ENCODE measurements at regions of chr1 and their contacts with region 1.

Region 1: GRCh38 chr1:18902523-18903290 is at the start of gene ALDH4A1:
- DNase-seq: peak; percentile 98 to 99 (median 98)
- ATAC-seq: peak; percentile 97 to 98 (median 97)
- H3K4me3 ChIP-seq: peak within 1 kb of the TSS; percentile 60 to 97 (median 85)
- H3K27ac ChIP-seq: peak within 1 kb of the TSS; percentile 74 to 95 (median 92)
- H3K4me1 ChIP-seq: peaks cover 0 to 38% (median 24%) of the 10 kb centered on the region in 12 donors
- H3K27me3 ChIP-seq: no peaks in the 10 kb centered on the region
- CTCF ChIP-seq: peak in 2 of 12 donors; percentile 13 to 28
- POLR2A ChIP-seq: peak in 1 of 2 donors; percentile 58
- total RNA-seq, gene ALDH4A1: 20.8 to 57.6 (median 30.6) TPM

Region 2: GRCh38 chr1:18949686-18950400 is 47.1 kb after region 1 on chr1:
- intact Hi-C with region 1: loop called in 3 of 10 experiments (anchors 5 to 10 kb)
- DNase-seq: peak in 2 of 5 donors; percentile 44 to 71
- ATAC-seq: peak in 3 of 4 donors; percentile 21 to 52 (median 32)
- H3K4me3 ChIP-seq: peak overlapping the region in 11 of 12 donors; percentile 7 to 61 (median 48)
- H3K27ac ChIP-seq: peak overlapping the region; percentile 69 to 96 (median 88)
- H3K4me1 ChIP-seq: peaks cover 5 to 96% (median 69%) of the 10 kb centered on the region in 12 donors
- H3K27me3 ChIP-seq: no peaks in the 10 kb centered on the region
- CTCF ChIP-seq: peak in 4 of 12 donors; percentile 9 to 38 (median 27)
- POLR2A ChIP-seq: no peak

Region 3: DNA sequence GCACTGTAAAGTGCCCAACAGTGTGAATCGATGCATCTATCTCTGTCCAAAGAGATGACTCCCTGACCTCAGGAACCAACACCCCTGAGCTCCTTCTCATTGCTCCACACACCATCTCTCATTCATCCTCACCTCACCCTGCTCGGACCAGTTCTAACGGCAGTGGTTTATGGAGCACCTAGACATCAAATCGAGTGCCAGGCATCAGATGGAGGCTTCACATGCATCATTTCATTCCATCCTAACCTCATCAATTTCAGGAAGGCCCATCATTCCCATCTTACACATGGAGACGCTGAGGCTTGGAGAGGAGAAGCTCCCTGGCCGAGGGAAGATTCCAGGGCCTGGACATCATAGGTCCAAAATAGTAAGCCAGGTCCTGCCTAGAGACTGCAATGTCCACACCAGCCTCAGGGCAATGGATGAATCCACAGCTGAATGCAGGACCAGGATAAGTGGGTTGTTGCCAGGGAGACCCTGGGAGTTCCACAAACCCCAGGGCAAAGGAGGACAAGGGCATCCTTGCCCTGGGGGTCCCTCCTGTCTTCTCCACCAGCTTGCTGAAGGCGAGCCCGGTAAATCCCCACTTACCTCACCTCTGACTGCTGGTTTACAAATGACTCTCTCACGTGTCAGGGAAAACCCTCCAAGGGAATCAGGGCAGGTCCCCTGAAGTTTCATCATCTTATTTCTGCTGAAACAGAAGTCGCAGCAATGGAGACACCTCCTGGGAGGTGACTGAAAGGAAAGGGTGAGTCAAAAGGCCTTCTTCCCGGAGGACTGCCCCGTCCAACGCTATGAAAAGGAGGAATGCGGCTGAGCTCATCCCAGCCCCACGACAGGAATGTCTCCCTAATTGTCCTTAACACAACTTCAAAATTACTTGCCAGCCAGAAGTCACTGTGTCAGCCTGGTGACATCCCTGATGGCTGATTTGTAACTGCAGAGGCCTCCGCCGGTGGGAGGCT is 62.8 kb after region 1 on chr1:
- intact Hi-C with region 1: loop called in 2 of 10 experiments (anchors 10 kb)
- DNase-seq: no peak
- ATAC-seq: peak in 2 of 4 donors; percentile 56 to 58
- H3K4me3 ChIP-seq: no peak overlapping the region
- H3K27ac ChIP-seq: no peak overlapping the region
- H3K4me1 ChIP-seq: peaks cover 0 to 14% (median 0%) of the 10 kb centered on the region in 12 donors
- H3K27me3 ChIP-seq: no peaks in the 10 kb centered on the region
- CTCF ChIP-seq: no peak
- POLR2A ChIP-seq: no peak

Region 4: GRCh38 chr1:19081218-19081893 is 178.6 kb after region 1 on chr1:
- intact Hi-C with region 1: loop called in 2 of 10 experiments (anchors 5 to 10 kb)
- DNase-seq: peak in 3 of 5 donors; percentile 46 to 64 (median 56)
- ATAC-seq: peak; percentile 42 to 71 (median 68)
- H3K4me3 ChIP-seq: peak overlapping the region in 9 of 12 donors; percentile 4 to 46 (median 31)
- H3K27ac ChIP-seq: peak overlapping the region in 11 of 12 donors; percentile 6 to 86 (median 61)
- H3K4me1 ChIP-seq: peaks cover 0 to 28% (median 11%) of the 10 kb centered on the region in 12 donors
- H3K27me3 ChIP-seq: no peaks in the 10 kb centered on the region
- CTCF ChIP-seq: no peak
- POLR2A ChIP-seq: no peak

Region 5: DNA sequence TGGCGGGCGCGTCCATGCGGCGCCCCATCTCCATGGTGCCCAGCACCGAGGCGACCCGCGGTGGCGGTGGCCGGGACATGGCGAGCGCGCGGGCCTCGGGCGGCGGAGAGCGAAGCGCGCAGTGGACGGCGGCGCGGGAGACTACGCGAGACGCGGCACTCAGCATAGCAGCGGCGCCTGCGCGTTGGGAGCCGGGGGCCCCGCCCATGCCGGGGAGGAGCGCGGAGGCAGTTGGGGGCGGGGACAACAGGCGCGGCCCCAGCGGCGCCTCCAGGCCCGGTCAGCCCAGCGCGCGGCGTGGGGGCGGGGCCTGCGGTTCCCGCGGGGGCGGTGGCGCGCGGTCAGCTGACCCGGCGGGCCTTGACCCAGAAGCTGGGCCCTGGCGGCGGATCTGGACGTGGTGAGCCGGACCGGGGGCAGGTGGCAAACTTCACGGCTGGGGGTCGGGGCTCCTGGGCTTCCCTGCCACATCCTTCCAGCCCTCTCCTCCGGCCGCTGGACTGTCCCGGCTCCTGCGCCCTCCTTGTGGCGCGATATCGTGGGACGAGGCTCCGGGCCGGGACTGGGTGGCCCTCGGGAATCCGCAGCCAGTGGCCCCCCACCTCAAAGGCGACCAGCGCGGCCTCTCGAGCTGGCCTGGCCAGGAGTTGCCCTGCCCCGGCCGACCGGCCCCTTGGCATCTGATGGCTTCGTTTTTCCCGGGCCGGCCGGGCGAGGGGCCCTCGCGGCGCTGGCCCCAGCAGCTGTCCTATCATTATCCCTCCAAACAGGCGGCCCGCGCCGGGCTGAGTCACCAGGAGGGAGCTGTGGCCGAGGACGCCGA is 409.5 kb after region 1 on chr1 and contains the starts of genes AKR7A2 and SLC66A1:
- intact Hi-C with region 1: loop called in 1 of 10 experiments (anchors 10 kb)
- DNase-seq: peak; percentile 92 to 97 (median 95)
- ATAC-seq: peak; percentile 95 to 97 (median 96)
- H3K4me3 ChIP-seq: peak within 1 kb of the TSS; percentile 59 to 97 (median 90)
- H3K27ac ChIP-seq: peak within 1 kb of the TSS; percentile 56 to 95 (median 92)
- H3K4me1 ChIP-seq: peaks cover 0 to 35% (median 20%) of the 10 kb centered on the region in 12 donors
- H3K27me3 ChIP-seq: no peaks in the 10 kb centered on the region
- CTCF ChIP-seq: peak in 4 of 12 donors; percentile 3 to 21 (median 13)
- POLR2A ChIP-seq: peak in 1 of 2 donors; percentile 79
- total RNA-seq, gene AKR7A2: 25.0 to 97.5 (median 46.4) TPM
- total RNA-seq, gene SLC66A1: 6.4 to 17.2 (median 8.2) TPM

Measured in heart left ventricle (tissue), 16 donors.